Posterior vena cava (tissue), 2 donors: ENCODE measurements at regions of chr2 and their contacts with region 1.

Region 1: DNA sequence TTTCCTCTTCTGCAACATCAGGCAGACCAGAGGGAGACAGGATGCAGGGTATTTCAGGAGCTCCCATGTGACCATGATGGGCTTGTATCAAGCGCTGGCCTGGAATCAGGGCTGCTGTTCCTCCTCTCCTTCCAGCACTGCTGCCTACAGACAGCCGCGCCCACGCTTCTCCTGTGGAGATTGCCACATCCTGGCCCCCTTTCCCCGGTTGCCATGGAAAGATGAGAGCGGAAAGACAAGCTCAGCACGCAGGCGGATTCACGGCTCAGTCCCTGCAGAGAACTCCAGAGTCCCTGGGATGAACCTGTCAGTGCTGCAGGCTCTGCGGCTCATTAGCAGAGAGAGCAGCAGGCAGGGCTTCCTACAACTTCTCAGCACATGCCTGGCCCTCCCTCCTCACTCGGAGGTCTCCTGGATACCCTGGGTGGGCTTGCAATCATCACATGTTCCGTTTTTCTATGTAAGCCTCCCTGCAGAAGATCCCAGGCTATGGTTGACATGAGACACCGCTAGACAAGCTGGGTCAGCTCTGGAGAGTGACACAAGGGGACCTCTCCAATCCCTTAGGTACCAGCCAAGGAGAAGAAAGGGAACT is 497.8 kb upstream of the MYT1L start:
- DNase-seq: peak; percentile 49

Region 2: GRCh38 chr2:989781-990467 is 1838.9 kb before region 1 on chr2:
- intact Hi-C with region 1: loop called in 1 of 2 experiments (anchors 5 kb)
- DNase-seq: no peak

Region 3: DNA sequence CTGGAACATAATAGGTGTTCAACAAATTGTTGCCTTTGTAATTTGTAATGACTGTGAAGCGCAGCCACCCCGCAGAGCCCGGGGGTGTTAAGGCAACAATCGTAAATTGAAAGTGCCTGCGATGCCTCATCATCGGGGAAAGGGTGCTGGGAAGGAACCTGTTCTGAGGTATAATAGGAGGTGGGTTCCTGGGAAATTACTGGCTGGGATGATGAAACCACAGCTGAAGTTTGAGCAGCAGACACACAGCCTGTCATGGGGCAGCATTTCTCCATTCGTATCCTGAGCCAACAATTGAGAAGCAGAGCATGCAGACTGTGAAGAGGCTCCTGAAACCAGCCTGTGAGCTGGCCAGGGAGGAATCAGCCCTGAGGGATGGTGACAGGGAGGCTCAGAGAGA is 93.8 kb before region 1 on chr2:
- intact Hi-C with region 1: no loop called
- DNase-seq: no peak

Region 4: GRCh38 chr2:2850859-2851258 is 22.0 kb after region 1 on chr2:
- intact Hi-C with region 1: loop called in 1 of 2 experiments (anchors 1 kb)
- DNase-seq: peak; percentile 14